ENCODE measurements at regions of chr5 and their contacts with region 1.

Region 1: GRCh38 chr5:71782771-71783770 is 64.0 kb downstream of the CARTPT start:
- DNase-seq: peak; percentile 76 to 84
- ATAC-seq: peak; percentile 83 to 92 (median 85)
- H3K4me3 ChIP-seq: peak overlapping the region in 8 of 10 donors; percentile 1 to 37 (median 32)
- H3K27ac ChIP-seq: peak overlapping the region in 6 of 10 donors; percentile 4 to 43 (median 30)
- H3K4me1 ChIP-seq: peaks cover 0 to 16% (median 5%) of the 10 kb centered on the region in 9 donors
- H3K27me3 ChIP-seq: no peaks in the 10 kb centered on the region
- CTCF ChIP-seq: peak; percentile 60 to 88 (median 80)

Region 2: GRCh38 chr5:71677977-71678376 is 105.1 kb before region 1 on chr5:
- intact Hi-C with region 1: no loop called
- DNase-seq: no peak
- ATAC-seq: no peak
- H3K4me3 ChIP-seq: no peak overlapping the region
- H3K27ac ChIP-seq: no peak overlapping the region
- H3K4me1 ChIP-seq: no peaks in the 10 kb centered on the region
- H3K27me3 ChIP-seq: peaks cover 0 to 30% (median 11%) of the 10 kb centered on the region in 7 donors
- CTCF ChIP-seq: no peak

Region 3: DNA sequence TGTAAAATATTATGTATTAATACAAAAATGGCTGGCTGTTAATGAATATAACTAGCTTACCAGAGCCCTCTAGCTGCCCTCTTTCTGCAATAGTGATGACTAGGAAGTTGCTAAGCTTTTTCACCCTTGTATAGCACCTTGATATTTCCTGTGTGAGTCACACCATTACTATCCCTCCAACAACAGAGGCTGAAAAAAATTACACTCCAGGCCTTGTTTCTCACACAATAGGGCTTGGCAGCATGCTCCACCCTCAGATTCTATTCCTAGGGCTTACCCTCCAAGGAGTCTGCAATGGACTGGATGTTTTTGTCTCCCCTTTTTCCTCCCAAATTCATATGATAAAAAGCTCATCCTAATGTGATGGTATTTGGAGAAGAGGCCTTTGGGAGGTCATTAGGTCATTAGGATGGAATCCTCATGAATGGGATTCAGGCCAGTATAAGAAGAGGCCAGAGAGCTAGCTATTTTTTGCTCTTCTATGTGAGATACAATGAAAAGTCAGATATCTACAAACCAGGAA is 139.6 kb after region 1 on chr5:
- intact Hi-C with region 1: loop called in 3 of 10 experiments (anchors 2 to 5 kb)
- DNase-seq: no peak
- ATAC-seq: peak; percentile 49 to 87 (median 66)
- H3K4me3 ChIP-seq: no peak overlapping the region
- H3K27ac ChIP-seq: peak overlapping the region; percentile 2 to 77 (median 53)
- H3K4me1 ChIP-seq: peaks cover 0 to 42% (median 25%) of the 10 kb centered on the region in 9 donors
- H3K27me3 ChIP-seq: no peaks in the 10 kb centered on the region
- CTCF ChIP-seq: peak in 4 of 9 donors; percentile 11 to 49 (median 30)

Region 4: GRCh38 chr5:72018146-72018803 is 235.2 kb after region 1 on chr5:
- intact Hi-C with region 1: loop called in 5 of 10 experiments (anchors 2 to 10 kb)
- DNase-seq: peak; percentile 11 to 19
- ATAC-seq: no peak
- H3K4me3 ChIP-seq: no peak overlapping the region
- H3K27ac ChIP-seq: no peak overlapping the region
- H3K4me1 ChIP-seq: peaks cover 0 to 12% (median 0%) of the 10 kb centered on the region in 9 donors
- H3K27me3 ChIP-seq: peaks cover 0 to 6% (median 0%) of the 10 kb centered on the region in 7 donors
- CTCF ChIP-seq: peak; percentile 65 to 95 (median 75)

Region 5: GRCh38 chr5:72307968-72308852 is 525.1 kb after region 1 on chr5:
- intact Hi-C with region 1: loop called (anchors 1 to 10 kb)
- DNase-seq: peak; percentile 97 to 98
- ATAC-seq: peak; percentile 98 to 100 (median 99)
- H3K4me3 ChIP-seq: peak overlapping the region; percentile 44 to 82 (median 70)
- H3K27ac ChIP-seq: peak overlapping the region; percentile 68 to 97 (median 94)
- H3K4me1 ChIP-seq: peaks cover 0 to 28% (median 12%) of the 10 kb centered on the region in 9 donors
- H3K27me3 ChIP-seq: no peaks in the 10 kb centered on the region
- CTCF ChIP-seq: peak; percentile 84 to 98 (median 93)

Region 6: GRCh38 chr5:72319976-72320752 is 537.1 kb after region 1 on chr5 and contains the starts of genes MRPS27 and PTCD2:
- intact Hi-C with region 1: loop called in 1 of 10 experiments (anchors 10 kb)
- DNase-seq: peak; percentile 93 to 97
- ATAC-seq: peak; percentile 99 to 100 (median 100)
- H3K4me3 ChIP-seq: peak within 1 kb of the TSS; percentile 60 to 91 (median 81)
- H3K27ac ChIP-seq: peak within 1 kb of the TSS; percentile 28 to 86 (median 80)
- H3K4me1 ChIP-seq: peaks cover 0 to 30% (median 20%) of the 10 kb centered on the region in 9 donors
- H3K27me3 ChIP-seq: no peaks in the 10 kb centered on the region
- CTCF ChIP-seq: peak in 4 of 9 donors; percentile 9 to 42 (median 38)
- total RNA-seq, gene MRPS27: 55.7 to 91.8 (median 79.2) TPM
- total RNA-seq, gene PTCD2: 11.3 to 28.9 (median 22.5) TPM

Region 7: DNA sequence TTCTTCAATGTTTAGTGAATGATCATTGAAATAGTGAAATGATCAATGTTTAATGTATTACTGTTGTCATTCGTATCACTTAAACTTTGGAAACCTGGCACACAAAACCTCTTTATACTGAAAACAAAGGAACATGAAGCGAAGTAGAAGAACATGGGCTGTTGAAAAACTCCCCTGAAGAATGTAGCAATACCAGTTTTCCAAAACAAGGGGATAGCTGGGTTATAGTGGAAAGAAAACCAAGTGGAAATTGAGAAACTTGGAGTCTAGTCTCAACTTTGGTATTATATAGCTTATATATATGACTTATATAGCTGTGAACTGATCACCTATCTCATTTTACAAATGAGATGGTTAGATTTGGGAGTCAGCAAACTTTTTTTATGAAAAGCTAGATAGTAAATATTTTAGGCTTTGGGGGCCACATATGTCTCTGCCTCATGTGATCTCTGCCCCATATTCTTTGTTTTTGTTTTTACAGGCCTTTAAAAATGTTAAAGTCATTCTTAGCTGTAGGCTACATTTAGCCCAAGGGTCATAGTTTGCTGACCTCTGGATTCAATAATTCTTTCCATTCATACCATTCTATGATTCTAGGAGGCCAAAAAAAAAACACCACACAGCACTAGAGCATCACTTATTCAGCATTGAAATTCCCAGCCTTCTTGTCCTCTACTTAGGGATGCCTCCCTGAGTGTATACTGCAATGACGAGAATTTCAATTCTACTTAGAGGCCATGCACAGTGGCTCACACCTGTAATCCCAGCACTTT is 553.9 kb after region 1 on chr5:
- intact Hi-C with region 1: no loop called
- DNase-seq: peak in 1 of 2 donors; percentile 11
- ATAC-seq: peak in 5 of 8 donors; percentile 54 to 83 (median 78)
- H3K4me3 ChIP-seq: no peak overlapping the region
- H3K27ac ChIP-seq: peak overlapping the region in 4 of 10 donors; percentile 1 to 52 (median 37)
- H3K4me1 ChIP-seq: no peaks in the 10 kb centered on the region
- H3K27me3 ChIP-seq: no peaks in the 10 kb centered on the region
- CTCF ChIP-seq: no peak

Measured in heart right ventricle (tissue), 16 donors.